Posterior cingulate gyrus (tissue), 11 donors: ENCODE measurements at regions of chr1 and their contacts with region 1.

Region 1: GRCh38 chr1:185317034-185317885 is at the start of gene IVNS1ABP:
- DNase-seq: peak; percentile 90 to 99 (median 93)

Region 2: GRCh38 chr1:184716158-184716557 is 601.1 kb before region 1 on chr1:
- intact Hi-C with region 1: no loop called
- DNase-seq: no peak

Region 3: DNA sequence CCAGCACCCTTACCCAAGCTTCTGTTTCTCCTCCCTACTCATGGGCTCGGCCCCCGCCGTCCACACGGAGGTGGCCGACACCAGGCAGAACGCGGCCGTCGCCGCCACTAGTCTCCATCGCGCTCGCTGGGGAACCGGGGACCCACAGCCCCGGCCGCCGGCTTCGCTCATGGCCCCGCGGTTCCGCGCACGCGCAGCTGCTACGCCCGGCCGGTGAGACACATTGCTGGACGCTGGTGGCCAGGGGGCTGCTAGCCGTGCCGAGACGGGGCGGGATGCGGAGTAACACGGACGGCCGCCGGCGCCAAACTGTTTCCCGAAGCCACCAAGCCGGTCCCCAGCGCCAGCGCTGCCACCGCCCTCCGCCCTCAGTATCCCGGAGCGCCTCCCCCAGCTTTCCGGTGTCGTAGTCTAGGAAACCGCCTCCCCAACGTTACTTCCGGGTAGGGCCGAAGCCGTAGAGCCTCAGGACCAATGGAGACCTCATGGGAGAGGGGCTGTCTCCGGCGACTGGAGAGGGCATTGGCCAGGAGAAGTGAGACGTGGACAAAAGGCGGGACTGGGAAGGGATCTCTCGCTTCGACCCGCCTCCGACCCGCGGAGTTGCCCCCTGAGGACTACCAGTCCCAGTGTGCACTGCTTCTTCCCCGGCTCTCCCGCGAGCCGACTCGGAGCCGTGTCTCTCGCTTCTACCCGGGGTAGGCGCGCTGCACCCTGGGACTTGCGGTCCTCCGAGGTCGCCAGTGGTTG is 562.6 kb before region 1 on chr1 and contains the start of gene EDEM3:
- intact Hi-C with region 1: loop called (anchors 10 kb)
- DNase-seq: peak; percentile 98 to 100 (median 99)

Region 4: DNA sequence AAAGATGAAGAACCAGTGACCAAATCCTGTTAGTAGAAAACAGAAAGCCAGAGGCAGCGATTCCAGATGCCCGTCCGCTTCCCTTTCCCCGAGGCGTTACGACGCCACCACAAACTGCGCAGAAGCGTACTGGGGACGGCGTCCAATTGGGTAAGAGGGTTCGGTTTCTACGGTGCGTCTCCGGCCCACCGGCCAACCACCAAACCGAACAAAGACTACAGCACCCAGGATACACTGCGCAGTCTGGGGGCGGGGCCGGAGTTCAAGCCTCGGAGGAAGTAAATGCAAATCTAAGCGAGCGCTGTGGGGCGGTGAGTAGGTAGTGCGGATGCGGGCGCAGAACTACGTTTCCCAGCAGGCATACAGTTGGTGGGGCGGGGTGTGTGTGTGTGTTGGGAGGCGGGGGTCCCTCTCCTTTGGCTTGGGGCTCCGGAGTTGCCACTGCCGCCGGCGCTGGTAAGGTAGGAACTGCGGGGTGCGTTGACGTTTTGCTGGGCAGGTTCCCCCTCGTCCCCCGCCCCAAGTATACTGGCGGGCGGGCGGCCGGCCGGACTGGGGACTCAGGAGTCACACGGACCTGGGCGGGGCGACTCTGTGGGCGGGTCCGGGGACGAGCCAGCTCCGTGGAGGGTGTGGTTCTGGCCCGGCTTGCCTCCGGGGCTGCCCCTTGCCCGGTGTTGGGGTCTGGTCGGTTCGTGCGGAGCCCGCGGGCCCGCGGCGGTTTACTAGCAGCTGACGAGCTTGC is 160.2 kb before region 1 on chr1 and contains the starts of genes SWT1 and TRMT1L:
- intact Hi-C with region 1: loop called (anchors 2 kb)
- DNase-seq: peak; percentile 99 to 100 (median 100)

Region 5: DNA sequence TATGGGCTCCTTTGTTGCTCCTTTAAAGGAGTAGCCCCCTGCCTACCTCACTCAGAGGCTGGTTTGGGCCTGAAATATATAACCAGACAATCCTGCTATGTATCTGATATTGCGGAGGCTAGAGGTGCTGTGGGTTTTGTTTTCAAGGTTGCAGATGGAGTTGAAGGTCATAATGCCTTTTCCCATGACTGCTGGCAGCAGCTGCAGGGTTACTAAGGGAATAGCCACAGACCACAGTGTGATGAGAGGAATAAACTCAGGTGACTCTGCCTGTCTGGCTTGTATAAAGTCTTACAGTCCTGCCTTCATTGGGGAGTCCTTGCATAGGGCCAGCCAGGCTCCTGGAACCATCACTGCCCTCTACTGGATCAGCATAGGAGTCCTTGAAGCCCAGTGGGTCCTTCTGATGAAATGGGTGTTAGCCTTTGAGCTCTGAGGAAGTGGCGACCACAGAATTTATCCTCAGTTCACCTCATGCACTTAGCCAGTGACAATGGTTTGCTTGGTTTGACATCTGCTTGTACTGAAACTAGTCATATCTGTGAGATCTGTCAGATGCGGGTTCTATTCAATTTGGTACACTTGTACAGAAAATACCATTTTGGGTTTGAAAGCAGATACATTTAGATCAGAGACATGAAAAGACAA is 242.5 kb after region 1 on chr1:
- intact Hi-C with region 1: loop called (anchors 5 kb)
- DNase-seq: peak in 5 of 10 donors; percentile 22 to 85 (median 35)

Region 6: GRCh38 chr1:185670187-185670627 is 352.9 kb after region 1 on chr1:
- intact Hi-C with region 1: loop called (anchors 10 kb)
- DNase-seq: no peak

Region 7: DNA sequence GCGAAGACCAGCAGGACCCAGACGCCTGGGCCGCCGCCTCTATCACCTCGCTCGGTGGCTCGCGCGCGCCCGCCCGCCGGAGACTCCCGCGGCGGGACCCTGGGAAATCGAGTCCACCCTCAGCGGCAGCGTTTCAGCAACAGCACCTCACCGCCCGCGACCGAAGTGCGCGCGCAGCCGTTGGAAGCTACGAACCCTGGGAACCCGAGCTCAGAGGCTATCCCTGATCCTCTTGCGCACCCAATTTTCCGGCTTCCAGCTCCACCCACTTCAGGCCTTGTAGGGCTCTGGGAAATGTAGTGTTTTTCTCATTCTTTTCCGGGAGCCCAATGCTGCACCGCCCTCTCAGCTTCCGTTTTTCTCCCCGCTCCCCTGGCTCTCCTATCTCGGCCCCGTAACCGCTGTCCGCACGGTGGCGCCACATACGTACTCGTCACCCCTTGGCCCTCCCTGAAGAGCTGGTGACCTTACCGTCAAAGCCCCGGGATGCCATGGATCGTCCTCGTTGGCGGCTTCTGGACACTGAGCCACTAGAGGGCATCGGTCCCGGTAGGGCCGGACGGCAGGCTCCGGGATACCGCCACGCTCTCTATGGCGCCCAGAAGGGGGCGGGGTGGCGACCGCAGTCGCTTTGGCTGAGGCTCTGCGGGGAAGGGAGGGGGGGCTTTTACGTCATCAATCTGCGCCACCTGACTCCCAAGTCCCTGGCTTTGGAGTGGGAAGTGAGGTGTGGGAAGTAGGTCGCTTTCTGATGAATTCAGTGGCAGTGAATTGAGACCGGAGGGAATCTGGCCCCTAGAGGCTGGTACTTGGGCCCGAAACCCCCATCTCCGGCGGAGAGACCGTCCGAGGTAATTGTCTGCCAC is 1058.1 kb after region 1 on chr1 and contains the starts of genes ODR4 and TPR:
- intact Hi-C with region 1: loop called (anchors 5 kb)
- DNase-seq: peak; percentile 93 to 99 (median 96)